Ascending aorta (tissue), 2 donors: ENCODE measurements at regions of chr10 and their contacts with region 1.

Region 1: DNA sequence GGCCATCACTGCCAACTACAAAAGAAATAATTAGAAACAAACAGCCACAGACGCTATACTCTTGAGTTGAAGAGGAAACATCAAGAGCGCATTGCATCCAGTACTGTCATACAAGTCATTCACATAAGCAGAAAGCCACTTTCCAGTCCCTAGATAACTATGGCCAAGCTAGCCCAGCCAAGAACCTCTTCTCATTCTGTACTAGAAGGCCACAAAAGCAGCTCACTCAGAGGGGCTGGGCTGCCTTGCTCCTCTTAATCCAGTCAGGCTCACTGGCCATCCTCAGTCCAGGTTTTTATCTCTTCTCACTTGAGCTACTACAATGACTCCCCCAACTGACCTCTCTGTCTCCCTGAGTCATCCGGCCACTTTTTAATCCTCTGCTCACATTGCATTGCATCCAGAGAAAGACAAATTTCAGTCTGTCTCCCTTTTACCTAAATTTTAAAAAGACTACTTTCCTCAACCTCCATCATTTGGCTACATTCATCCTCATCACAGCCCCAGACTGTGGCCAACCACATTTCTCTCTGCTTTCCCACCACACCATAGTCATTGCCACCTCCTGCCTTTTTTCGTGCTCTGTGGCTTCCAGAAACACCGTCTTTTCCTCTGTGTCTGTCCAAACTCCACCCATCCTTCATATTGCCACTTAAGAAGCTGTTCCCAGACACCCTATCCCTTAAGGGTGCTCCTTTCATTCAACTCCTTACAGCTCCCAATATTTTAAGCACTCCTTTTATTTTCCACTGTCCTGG is 25.0 kb downstream of the PPP1R3C start:
- DNase-seq: no peak
- H3K4me3 ChIP-seq: no peak overlapping the region
- H3K27ac ChIP-seq: peak overlapping the region; percentile 84 to 88
- H3K4me1 ChIP-seq: peaks cover 12 to 50% of the 10 kb centered on the region in 2 donors
- H3K27me3 ChIP-seq: no peaks in the 10 kb centered on the region
- CTCF ChIP-seq: no peak

Region 2: GRCh38 chr10:91590142-91590903 is 17.5 kb before region 1 on chr10:
- intact Hi-C with region 1: loop called (anchors 2 kb)
- DNase-seq: peak in 1 of 2 donors; percentile 94
- H3K4me3 ChIP-seq: peak overlapping the region in 1 of 2 donors; percentile 22
- H3K27ac ChIP-seq: peak overlapping the region; percentile 93 to 97
- H3K4me1 ChIP-seq: peaks cover 39 to 71% of the 10 kb centered on the region in 2 donors
- H3K27me3 ChIP-seq: no peaks in the 10 kb centered on the region
- CTCF ChIP-seq: no peak